ENCODE measurements at regions of chr17 and their contacts with region 1.

Region 1: DNA sequence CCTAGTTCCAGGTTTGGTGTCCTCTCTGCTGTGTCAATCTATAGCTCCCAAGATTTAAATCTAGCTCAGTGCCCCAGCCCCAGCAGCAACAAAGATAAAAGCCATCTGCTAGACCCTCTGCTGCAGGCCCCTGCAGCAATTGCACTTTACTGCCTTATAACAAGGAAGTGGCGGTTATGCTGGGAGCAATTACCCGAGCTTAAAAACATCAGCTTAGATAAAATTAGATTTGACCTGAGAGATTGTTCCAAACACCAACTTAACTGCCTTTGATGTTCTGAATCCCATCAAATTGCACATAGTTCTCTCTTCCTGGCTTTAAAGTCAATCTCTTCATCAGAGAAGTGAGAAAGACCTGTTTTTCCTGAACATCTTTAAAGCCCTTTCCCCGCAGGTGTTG is 62.4 kb upstream of the SHISA6 start:
- DNase-seq: peak in 1 of 2 experiments; percentile 38
- H3K4me3 ChIP-seq: no peak overlapping the region
- H3K4me3 Mint-ChIP-seq: no peak overlapping the region
- H3K27ac Mint-ChIP-seq: peak overlapping the region; percentile 59
- H3K4me1 ChIP-seq: peaks cover 11% of the 10 kb centered on the region
- H3K4me1 Mint-ChIP-seq: no peaks in the 10 kb centered on the region
- H3K27me3 ChIP-seq: no peaks in the 10 kb centered on the region
- H3K27me3 Mint-ChIP-seq: no peaks in the 10 kb centered on the region
- CTCF ChIP-seq: no peak

Region 2: GRCh38 chr17:11240041-11240801 is 61.6 kb after region 1 on chr17:
- CTCF ChIA-PET with region 1: no interaction called
- POLR2A ChIA-PET with region 1: no interaction called
- intact Hi-C with region 1: loop called (anchors 5 kb)
- DNase-seq: peak; percentile 20 to 29
- H3K4me3 ChIP-seq: peak overlapping the region; percentile 52
- H3K4me3 Mint-ChIP-seq: peak overlapping the region; percentile 63
- H3K27ac Mint-ChIP-seq: no peak overlapping the region
- H3K4me1 ChIP-seq: no peaks in the 10 kb centered on the region
- H3K4me1 Mint-ChIP-seq: no peaks in the 10 kb centered on the region
- H3K27me3 ChIP-seq: no peaks in the 10 kb centered on the region
- H3K27me3 Mint-ChIP-seq: no peaks in the 10 kb centered on the region
- CTCF ChIP-seq: no peak

Measured in Caco-2 (cell line).